HEK293T (cell line): ENCODE measurements at regions of chr10 and their contacts with region 1.

Region 1: GRCh38 chr10:15719899-15720634 is at the start of gene ITGA8:
- DNase-seq: peak; percentile 67

Region 2: DNA sequence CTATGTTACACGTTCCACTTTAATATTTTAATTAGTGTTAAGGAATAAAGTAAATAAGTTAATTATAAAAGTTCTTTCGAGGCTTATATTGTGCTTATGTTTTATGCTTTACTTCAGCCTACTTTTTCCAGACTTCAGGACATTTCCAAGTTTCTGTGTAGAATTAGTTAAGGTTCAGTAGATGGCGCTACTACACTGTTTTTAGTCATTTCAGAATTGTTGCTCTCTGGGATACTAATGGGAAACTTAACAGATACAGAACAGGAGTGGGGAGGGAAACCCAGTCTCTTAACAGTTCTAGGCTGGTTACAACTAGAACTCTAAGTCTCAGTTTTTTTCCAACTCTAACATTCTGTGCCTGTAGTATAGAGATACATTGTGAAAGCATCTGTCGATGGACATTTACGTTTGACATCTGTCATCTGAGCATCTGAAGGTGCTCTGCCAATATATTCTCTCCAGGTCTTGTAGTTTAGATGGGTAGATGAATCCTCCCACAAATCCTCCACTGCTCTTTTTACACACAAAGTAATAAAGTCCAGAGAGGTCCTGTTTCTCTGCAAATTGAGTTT is 292.1 kb before region 1 on chr10:
- CTCF ChIA-PET with region 1: interaction called, 13 read pairs
- POLR2A ChIA-PET with region 1: no interaction called
- DNase-seq: no peak

Region 3: GRCh38 chr10:15439341-15439842 is 280.7 kb before region 1 on chr10:
- CTCF ChIA-PET with region 1: interaction called, 14 read pairs
- POLR2A ChIA-PET with region 1: interaction called, 7 read pairs
- DNase-seq: peak; percentile 62

Region 4: DNA sequence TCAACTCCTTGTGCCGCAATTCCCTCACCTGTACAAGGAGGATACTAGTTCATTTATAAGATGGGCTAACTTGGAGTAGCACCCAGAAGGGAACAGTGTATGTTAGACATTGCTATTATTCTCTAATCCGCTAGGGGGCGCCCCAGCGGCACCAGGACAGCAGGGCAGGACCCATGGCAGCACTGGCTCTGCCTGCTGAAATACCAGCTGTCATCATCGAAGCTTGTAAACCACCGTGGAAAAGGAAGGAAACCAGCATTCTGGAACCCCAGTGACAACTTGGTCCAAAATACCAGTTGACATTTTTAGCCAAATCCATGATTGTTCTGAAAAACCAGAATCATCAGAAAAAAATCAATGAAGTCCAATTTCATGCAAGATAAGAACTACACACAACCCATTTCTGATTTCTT is 134.8 kb before region 1 on chr10:
- CTCF ChIA-PET with region 1: interaction called, 15 read pairs
- POLR2A ChIA-PET with region 1: no interaction called
- DNase-seq: peak; percentile 84

Region 5: GRCh38 chr10:15805395-15806058 is 85.5 kb after region 1 on chr10:
- CTCF ChIA-PET with region 1: no interaction called
- POLR2A ChIA-PET with region 1: no interaction called
- DNase-seq: no peak

Region 6: DNA sequence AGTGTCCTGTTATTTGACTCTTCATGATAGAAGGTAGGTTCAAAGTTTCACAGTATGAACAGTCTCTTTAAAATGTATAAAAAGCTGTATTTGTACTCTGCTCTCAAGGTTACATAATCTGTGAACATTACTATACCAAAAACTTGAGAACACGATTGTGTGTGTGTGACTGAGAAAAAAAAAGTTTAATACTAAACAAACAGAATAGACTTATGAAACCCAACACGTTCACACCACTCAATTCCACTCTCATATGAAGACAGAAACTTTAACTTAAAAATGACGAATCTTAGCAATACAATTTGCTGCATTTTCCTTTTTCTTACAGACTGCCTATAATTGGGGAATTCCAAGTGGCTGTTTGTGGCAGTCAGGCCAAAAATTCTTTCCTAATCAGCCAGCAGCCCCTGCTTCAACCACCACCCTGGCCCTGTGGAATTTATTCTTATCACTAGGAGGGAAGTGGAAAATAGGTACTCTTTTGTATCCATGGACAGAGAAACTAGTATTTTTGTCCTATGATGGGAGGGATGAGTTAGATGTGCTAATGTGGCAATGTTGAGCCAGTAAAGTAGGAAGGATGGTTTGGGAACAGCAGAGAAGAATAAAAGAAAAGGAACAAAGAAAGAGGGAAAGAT is 97.5 kb after region 1 on chr10:
- CTCF ChIA-PET with region 1: interaction called, 12 read pairs
- POLR2A ChIA-PET with region 1: no interaction called
- DNase-seq: no peak

Region 7: DNA sequence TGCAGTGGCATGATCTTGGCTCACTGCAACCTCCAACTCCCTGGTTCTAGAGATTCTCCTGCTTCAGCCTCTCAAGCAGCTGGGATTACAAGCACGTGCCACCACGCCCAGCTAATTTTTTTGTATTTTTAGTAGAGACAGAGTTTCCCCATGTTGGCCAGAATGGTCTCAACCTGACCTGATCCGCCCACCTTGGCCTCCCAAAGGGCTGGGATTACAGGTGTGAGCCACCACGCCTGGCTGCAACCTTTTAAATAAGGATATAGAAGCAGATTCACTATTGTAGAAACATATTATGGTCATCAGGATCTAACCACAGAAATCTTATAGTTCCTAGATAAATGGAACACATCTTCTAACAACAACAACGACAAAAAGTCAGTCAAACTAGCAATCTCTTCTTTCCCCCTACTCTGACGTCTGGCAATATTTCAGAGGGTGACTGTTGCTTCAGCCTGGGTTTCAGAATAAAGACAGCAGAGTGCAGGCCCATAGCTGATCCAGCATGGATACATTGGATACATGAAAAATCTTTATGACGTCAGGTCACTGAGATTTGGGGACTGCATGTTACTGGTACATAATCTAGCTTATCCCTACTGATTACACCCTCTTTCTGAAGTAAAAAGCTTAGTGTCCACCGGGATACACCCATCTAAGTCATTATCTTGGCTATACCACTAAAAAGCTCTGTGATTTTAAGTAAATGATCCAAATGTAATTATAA is 252.8 kb after region 1 on chr10:
- CTCF ChIA-PET with region 1: no interaction called
- POLR2A ChIA-PET with region 1: no interaction called
- DNase-seq: no peak